Esophagus muscularis mucosa (tissue), 4 donors: ENCODE measurements at regions of chr2 and their contacts with region 1.

Region 1: DNA sequence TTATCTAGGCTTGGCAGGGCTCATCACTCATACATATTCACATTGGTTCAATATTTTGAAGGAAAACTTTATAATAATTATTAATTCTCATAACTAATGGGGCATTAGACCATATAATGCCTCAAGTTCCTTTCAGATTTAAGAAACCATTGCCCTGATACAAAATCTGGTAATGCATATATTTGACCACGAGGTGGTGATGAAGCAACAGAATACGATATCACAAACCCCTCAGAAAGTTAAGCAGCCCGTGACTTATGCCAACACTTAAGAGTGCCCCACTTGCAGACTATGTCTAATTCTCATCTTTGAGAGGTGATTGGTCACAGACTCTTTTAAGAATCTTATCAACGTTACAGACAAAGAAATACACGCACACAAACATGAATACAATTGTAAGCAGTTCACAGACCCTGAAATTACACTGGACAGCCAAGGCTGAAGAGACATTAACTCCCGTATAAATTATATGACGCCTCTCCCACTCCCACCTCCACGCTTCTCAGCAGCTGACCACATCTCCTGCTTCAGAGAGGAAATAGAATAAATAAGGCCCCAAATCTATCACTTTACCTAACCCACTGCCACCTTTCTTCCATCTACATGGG is 20.7 kb upstream of the DNAH6 start:
- DNase-seq: no peak
- H3K4me3 ChIP-seq: no peak overlapping the region
- H3K27ac ChIP-seq: no peak overlapping the region
- H3K4me1 ChIP-seq: peaks cover 0 to 4% (median 0%) of the 10 kb centered on the region in 4 donors
- H3K27me3 ChIP-seq: no peaks in the 10 kb centered on the region
- CTCF ChIP-seq: peak; percentile 67 to 75 (median 71)
- EP300 ChIP-seq: no peak
- POLR2A ChIP-seq: no peak

Region 2: DNA sequence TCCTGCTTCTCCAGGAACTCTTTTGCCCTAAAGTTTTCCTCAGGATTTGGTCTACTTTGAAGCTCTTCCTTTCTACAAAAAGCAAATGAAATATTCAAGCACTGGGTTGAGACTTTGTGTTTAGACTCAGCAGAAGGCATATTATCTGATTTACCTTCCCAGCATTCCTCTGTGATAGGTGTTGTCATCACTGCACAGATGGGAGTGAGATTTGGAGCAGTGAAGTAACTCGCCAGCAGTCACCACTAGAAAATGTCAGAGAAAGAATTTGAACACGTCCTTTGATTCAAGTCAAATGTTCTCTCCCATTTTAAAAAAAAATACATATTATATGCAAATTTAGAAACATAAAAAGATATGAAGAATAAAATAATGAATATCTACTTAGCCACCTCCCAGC is 132.8 kb after region 1 on chr2:
- intact Hi-C with region 1: loop called (anchors 5 kb)
- DNase-seq: no peak
- H3K4me3 ChIP-seq: no peak overlapping the region
- H3K27ac ChIP-seq: no peak overlapping the region
- H3K4me1 ChIP-seq: no peaks in the 10 kb centered on the region
- H3K27me3 ChIP-seq: no peaks in the 10 kb centered on the region
- CTCF ChIP-seq: no peak
- EP300 ChIP-seq: no peak
- POLR2A ChIP-seq: no peak

Region 3: GRCh38 chr2:84749442-84749841 is 253.8 kb after region 1 on chr2:
- intact Hi-C with region 1: no loop called
- DNase-seq: no peak
- H3K4me3 ChIP-seq: no peak overlapping the region
- H3K27ac ChIP-seq: no peak overlapping the region
- H3K4me1 ChIP-seq: no peaks in the 10 kb centered on the region
- H3K27me3 ChIP-seq: no peaks in the 10 kb centered on the region
- CTCF ChIP-seq: no peak
- EP300 ChIP-seq: no peak
- POLR2A ChIP-seq: no peak

Region 4: GRCh38 chr2:84881581-84882414 is 386.2 kb after region 1 on chr2:
- intact Hi-C with region 1: loop called (anchors 2 kb)
- DNase-seq: no peak
- H3K4me3 ChIP-seq: peak overlapping the region; percentile 53 to 60 (median 56)
- H3K27ac ChIP-seq: peak overlapping the region in 1 of 4 donors; percentile 15
- H3K4me1 ChIP-seq: peaks cover 22 to 32% (median 29%) of the 10 kb centered on the region in 4 donors
- H3K27me3 ChIP-seq: peaks cover 0 to 60% (median 22%) of the 10 kb centered on the region in 4 donors
- CTCF ChIP-seq: peak; percentile 65 to 69 (median 66)
- EP300 ChIP-seq: no peak
- POLR2A ChIP-seq: no peak

Region 5: GRCh38 chr2:84925724-84926376 is 430.2 kb after region 1 on chr2:
- intact Hi-C with region 1: loop called (anchors 5 kb)
- DNase-seq: peak; percentile 99
- H3K4me3 ChIP-seq: peak overlapping the region; percentile 39 to 60 (median 43)
- H3K27ac ChIP-seq: peak overlapping the region; percentile 22 to 65 (median 45)
- H3K4me1 ChIP-seq: peaks cover 16 to 30% (median 22%) of the 10 kb centered on the region in 4 donors
- H3K27me3 ChIP-seq: no peaks in the 10 kb centered on the region
- CTCF ChIP-seq: peak; percentile 87 to 95 (median 90)
- EP300 ChIP-seq: no peak
- POLR2A ChIP-seq: no peak

Region 6: DNA sequence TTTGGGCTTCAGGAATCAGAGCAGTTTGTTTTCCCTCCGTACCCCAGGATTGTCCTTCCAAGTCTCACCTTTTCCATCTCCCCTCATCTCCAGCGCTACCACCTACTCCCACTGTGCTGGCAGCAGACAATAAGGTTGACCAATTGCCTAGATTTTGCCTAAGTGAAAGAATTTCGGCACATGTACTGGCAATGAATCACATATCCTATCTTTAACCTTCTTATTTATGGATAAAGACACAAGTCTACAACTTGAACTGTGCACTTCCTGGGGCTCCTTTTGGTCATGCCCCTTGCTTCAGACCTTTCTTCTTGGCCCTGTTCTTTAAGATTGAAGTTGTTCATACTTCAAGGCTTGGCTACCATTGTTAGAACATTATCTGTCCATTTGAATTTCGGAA is 546.7 kb after region 1 on chr2:
- intact Hi-C with region 1: no loop called
- DNase-seq: no peak
- H3K4me3 ChIP-seq: no peak overlapping the region
- H3K27ac ChIP-seq: no peak overlapping the region
- H3K4me1 ChIP-seq: peaks cover 0 to 8% (median 0%) of the 10 kb centered on the region in 4 donors
- H3K27me3 ChIP-seq: no peaks in the 10 kb centered on the region
- CTCF ChIP-seq: no peak
- EP300 ChIP-seq: no peak
- POLR2A ChIP-seq: no peak